ENCODE measurements at regions of chr10 and their contacts with region 1.

Region 1: GRCh38 chr10:96831867-96832720 is at the start of gene LCOR:
- DNase-seq: peak; percentile 66 to 94 (median 80)
- ATAC-seq: peak; percentile 69
- H3K4me3 ChIP-seq: peak within 1 kb of the TSS; percentile 72 to 76
- H3K4me3 Mint-ChIP-seq: peak within 1 kb of the TSS; percentile 89
- H3K27ac ChIP-seq: peak within 1 kb of the TSS; percentile 64 to 71
- H3K27ac Mint-ChIP-seq: peak within 1 kb of the TSS; percentile 97
- H3K4me1 ChIP-seq: peaks cover 25% of the 10 kb centered on the region
- H3K4me1 Mint-ChIP-seq: peaks cover 47% of the 10 kb centered on the region
- H3K27me3 ChIP-seq: no peaks in the 10 kb centered on the region
- H3K27me3 Mint-ChIP-seq: no peaks in the 10 kb centered on the region
- CTCF ChIP-seq: no peak
- total RNA-seq, gene LCOR: 57.9 to 62.0 TPM

Region 2: GRCh38 chr10:96395931-96396877 is 435.9 kb before region 1 on chr10:
- CTCF ChIA-PET with region 1: interaction called, 4 read pairs
- POLR2A ChIA-PET with region 1: no interaction called
- intact Hi-C with region 1: loop called (anchors 1 to 2 kb)
- DNase-seq: peak; percentile 16 to 78 (median 53)
- ATAC-seq: peak; percentile 88
- H3K4me3 ChIP-seq: no peak overlapping the region
- H3K4me3 Mint-ChIP-seq: peak overlapping the region; percentile 57
- H3K27ac ChIP-seq: no peak overlapping the region
- H3K27ac Mint-ChIP-seq: no peak overlapping the region
- H3K4me1 ChIP-seq: no peaks in the 10 kb centered on the region
- H3K4me1 Mint-ChIP-seq: no peaks in the 10 kb centered on the region
- H3K27me3 ChIP-seq: peaks cover 0 to 3% of the 10 kb centered on the region in 2 experiments
- H3K27me3 Mint-ChIP-seq: peaks cover 12% of the 10 kb centered on the region
- CTCF ChIP-seq: peak; percentile 79

Region 3: GRCh38 chr10:96719850-96720421 is 112.2 kb before region 1 on chr10:
- CTCF ChIA-PET with region 1: no interaction called
- POLR2A ChIA-PET with region 1: no interaction called
- intact Hi-C with region 1: loop called in 1 of 2 experiments (anchors 2 kb)
- DNase-seq: peak; percentile 27 to 80 (median 58)
- ATAC-seq: peak; percentile 53
- H3K4me3 ChIP-seq: peak overlapping the region; percentile 53 to 81
- H3K4me3 Mint-ChIP-seq: peak overlapping the region; percentile 95
- H3K27ac ChIP-seq: peak overlapping the region in 1 of 2 experiments; percentile 88
- H3K27ac Mint-ChIP-seq: peak overlapping the region; percentile 88
- H3K4me1 ChIP-seq: peaks cover 7% of the 10 kb centered on the region
- H3K4me1 Mint-ChIP-seq: peaks cover 40% of the 10 kb centered on the region
- H3K27me3 ChIP-seq: no peaks in the 10 kb centered on the region
- H3K27me3 Mint-ChIP-seq: no peaks in the 10 kb centered on the region
- CTCF ChIP-seq: peak; percentile 28

Region 4: GRCh38 chr10:97318772-97319651 is 486.9 kb after region 1 on chr10 and contains the start of gene FRAT1:
- CTCF ChIA-PET with region 1: no interaction called
- POLR2A ChIA-PET with region 1: no interaction called
- intact Hi-C with region 1: loop called in 1 of 2 experiments (anchors 10 kb)
- DNase-seq: peak; percentile 86 to 97 (median 92)
- ATAC-seq: peak; percentile 76
- H3K4me3 ChIP-seq: peak within 1 kb of the TSS; percentile 76 to 79
- H3K4me3 Mint-ChIP-seq: peak within 1 kb of the TSS; percentile 99
- H3K27ac ChIP-seq: peak within 1 kb of the TSS; percentile 100
- H3K27ac Mint-ChIP-seq: peak within 1 kb of the TSS; percentile 100
- H3K4me1 ChIP-seq: peaks cover 24% of the 10 kb centered on the region
- H3K4me1 Mint-ChIP-seq: peaks cover 29% of the 10 kb centered on the region
- H3K27me3 ChIP-seq: no peaks in the 10 kb centered on the region
- H3K27me3 Mint-ChIP-seq: no peaks in the 10 kb centered on the region
- CTCF ChIP-seq: no peak
- total RNA-seq, gene FRAT1: 39.6 to 40.2 TPM

Region 5: GRCh38 chr10:97640174-97640867 is 808.2 kb after region 1 on chr10 and contains the start of gene PI4K2A:
- CTCF ChIA-PET with region 1: no interaction called
- POLR2A ChIA-PET with region 1: no interaction called
- intact Hi-C with region 1: loop called in 1 of 2 experiments (anchors 5 kb)
- DNase-seq: peak; percentile 97 to 100 (median 98)
- ATAC-seq: peak; percentile 97
- H3K4me3 ChIP-seq: peak within 1 kb of the TSS; percentile 58 to 84
- H3K4me3 Mint-ChIP-seq: peak within 1 kb of the TSS; percentile 95
- H3K27ac ChIP-seq: peak within 1 kb of the TSS; percentile 54 to 55
- H3K27ac Mint-ChIP-seq: peak within 1 kb of the TSS; percentile 90
- H3K4me1 ChIP-seq: peaks cover 10% of the 10 kb centered on the region
- H3K4me1 Mint-ChIP-seq: peaks cover 24% of the 10 kb centered on the region
- H3K27me3 ChIP-seq: no peaks in the 10 kb centered on the region
- H3K27me3 Mint-ChIP-seq: no peaks in the 10 kb centered on the region
- CTCF ChIP-seq: no peak
- total RNA-seq, gene PI4K2A: 37.6 to 37.7 TPM